ENCODE measurements at regions of chr19 and their contacts with region 1.

Region 1: DNA sequence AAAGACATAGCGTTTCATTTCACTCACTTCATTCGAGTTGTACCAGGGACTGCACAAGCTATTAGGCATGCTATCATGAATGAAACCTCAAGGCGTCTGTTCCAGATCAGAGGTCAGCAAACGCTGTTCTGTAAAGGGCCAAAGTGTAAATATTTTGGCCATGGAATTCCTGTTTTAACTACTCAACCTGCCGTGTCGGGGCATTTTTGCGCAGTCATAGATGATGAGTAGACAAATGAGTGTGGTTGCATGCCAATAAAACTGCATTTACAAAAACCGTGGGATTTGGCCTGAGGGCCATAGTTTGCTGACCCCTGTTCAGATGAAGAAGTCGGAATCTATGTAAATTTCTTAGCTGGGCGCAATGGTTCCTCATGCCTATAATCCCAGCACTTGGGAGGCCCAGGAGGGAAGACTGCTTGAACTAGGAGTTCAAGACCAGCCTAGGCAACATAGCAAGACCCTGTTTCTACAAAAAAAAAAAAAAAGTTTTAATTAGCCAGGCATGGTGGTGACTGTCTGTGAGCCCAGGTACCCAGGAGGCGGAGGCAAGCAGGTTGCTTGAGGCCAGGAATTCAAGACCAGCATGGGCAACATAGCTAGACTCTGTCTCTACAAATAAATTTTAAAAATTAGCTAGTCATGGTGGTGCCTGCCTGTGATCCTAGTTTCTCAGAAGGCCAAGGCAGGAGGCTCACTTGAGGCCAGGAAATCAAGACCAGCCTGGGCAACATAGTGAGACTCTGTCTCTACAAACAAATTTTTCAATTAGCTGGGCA is 6.3 kb downstream of the INSR start:
- DNase-seq: no peak
- ATAC-seq: no peak
- H3K4me3 ChIP-seq: no peak overlapping the region
- H3K27ac ChIP-seq: no peak overlapping the region
- H3K4me1 ChIP-seq: no peaks in the 10 kb centered on the region
- H3K27me3 ChIP-seq: no peaks in the 10 kb centered on the region
- CTCF ChIP-seq: no peak

Region 2: DNA sequence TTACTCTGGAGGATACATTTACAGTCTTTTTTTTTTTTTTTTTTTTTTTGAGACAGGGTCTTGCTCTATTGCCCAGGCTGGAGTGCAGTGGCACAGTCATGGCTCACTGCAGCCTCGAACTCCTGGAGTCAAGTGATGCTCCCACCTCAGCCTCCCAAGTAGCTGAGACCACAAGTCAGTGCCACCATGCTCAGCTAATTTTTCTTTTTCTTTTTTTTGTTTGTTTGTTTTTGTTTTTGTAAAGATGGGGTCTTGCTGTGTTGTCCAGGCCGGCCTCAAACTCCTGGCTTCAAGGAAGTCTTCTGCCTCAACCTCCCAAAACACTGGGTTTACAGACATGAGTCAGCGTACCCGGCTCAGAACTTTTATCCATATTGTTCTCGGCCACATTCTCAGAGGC is 58.2 kb before region 1 on chr19:
- CTCF ChIA-PET with region 1: no interaction called
- POLR2A ChIA-PET with region 1: interaction called, 11 read pairs
- in situ Hi-C with region 1: no loop called
- intact Hi-C with region 1: no loop called
- DNase-seq: no peak
- ATAC-seq: no peak
- H3K4me3 ChIP-seq: no peak overlapping the region
- H3K27ac ChIP-seq: no peak overlapping the region
- H3K4me1 ChIP-seq: no peaks in the 10 kb centered on the region
- H3K27me3 ChIP-seq: no peaks in the 10 kb centered on the region
- CTCF ChIP-seq: no peak

Region 3: GRCh38 chr19:7301525-7301924 is 13.6 kb after region 1 on chr19:
- CTCF ChIA-PET with region 1: no interaction called
- POLR2A ChIA-PET with region 1: no interaction called
- in situ Hi-C with region 1: no loop called
- intact Hi-C with region 1: no loop called
- DNase-seq: no peak
- ATAC-seq: no peak
- H3K4me3 ChIP-seq: no peak overlapping the region
- H3K27ac ChIP-seq: no peak overlapping the region
- H3K4me1 ChIP-seq: no peaks in the 10 kb centered on the region
- H3K27me3 ChIP-seq: no peaks in the 10 kb centered on the region
- CTCF ChIP-seq: no peak

Region 4: DNA sequence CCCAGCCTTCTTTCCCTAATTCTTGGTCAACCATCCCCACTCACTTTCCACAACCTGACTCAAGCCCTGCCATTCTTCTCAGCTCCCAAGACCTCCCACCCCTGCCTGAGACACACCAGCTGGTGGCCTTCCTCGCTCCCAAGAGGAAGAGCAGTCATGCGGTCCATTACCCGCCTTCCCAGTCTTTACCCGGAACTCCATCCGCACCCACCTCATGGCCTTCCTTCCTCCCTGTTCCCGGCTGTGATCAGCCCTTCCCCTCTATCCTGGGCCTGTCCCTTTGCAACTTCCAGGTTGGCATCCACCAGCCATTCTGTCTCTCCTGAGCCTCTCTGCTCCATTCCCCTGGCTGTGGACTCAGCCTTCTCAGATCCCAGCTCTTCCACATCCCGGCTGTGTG is 24.9 kb after region 1 on chr19:
- CTCF ChIA-PET with region 1: no interaction called
- POLR2A ChIA-PET with region 1: interaction called, 17 read pairs
- in situ Hi-C with region 1: no loop called
- intact Hi-C with region 1: no loop called
- DNase-seq: no peak
- ATAC-seq: no peak
- H3K4me3 ChIP-seq: no peak overlapping the region
- H3K27ac ChIP-seq: no peak overlapping the region
- H3K4me1 ChIP-seq: no peaks in the 10 kb centered on the region
- H3K27me3 ChIP-seq: no peaks in the 10 kb centered on the region
- CTCF ChIP-seq: no peak